Activated B cell treated with CpG ODN at 0.5 μM for 24 hours (primary cell): ENCODE measurements at regions of chr1 and their contacts with region 1.

Region 1: GRCh38 chr1:23577056-23578004 is 18.0 kb upstream of the ID3 start:
- DNase-seq: no peak
- ATAC-seq: peak; percentile 75
- H3K4me3 Mint-ChIP-seq: peak overlapping the region; percentile 74
- H3K27ac Mint-ChIP-seq: peak overlapping the region; percentile 87
- H3K4me1 Mint-ChIP-seq: peaks cover 86% of the 10 kb centered on the region
- H3K27me3 Mint-ChIP-seq: no peaks in the 10 kb centered on the region
- CTCF ChIP-seq: no peak

Region 2: GRCh38 chr1:21865943-21866706 is 1711.2 kb before region 1 on chr1:
- CTCF ChIA-PET with region 1: no interaction called
- POLR2A ChIA-PET with region 1: no interaction called
- intact Hi-C with region 1: no loop called
- DNase-seq: peak; percentile 27
- ATAC-seq: peak; percentile 79
- H3K4me3 Mint-ChIP-seq: peak overlapping the region; percentile 44
- H3K27ac Mint-ChIP-seq: peak overlapping the region; percentile 84
- H3K4me1 Mint-ChIP-seq: peaks cover 21% of the 10 kb centered on the region
- H3K27me3 Mint-ChIP-seq: no peaks in the 10 kb centered on the region
- CTCF ChIP-seq: no peak

Region 3: DNA sequence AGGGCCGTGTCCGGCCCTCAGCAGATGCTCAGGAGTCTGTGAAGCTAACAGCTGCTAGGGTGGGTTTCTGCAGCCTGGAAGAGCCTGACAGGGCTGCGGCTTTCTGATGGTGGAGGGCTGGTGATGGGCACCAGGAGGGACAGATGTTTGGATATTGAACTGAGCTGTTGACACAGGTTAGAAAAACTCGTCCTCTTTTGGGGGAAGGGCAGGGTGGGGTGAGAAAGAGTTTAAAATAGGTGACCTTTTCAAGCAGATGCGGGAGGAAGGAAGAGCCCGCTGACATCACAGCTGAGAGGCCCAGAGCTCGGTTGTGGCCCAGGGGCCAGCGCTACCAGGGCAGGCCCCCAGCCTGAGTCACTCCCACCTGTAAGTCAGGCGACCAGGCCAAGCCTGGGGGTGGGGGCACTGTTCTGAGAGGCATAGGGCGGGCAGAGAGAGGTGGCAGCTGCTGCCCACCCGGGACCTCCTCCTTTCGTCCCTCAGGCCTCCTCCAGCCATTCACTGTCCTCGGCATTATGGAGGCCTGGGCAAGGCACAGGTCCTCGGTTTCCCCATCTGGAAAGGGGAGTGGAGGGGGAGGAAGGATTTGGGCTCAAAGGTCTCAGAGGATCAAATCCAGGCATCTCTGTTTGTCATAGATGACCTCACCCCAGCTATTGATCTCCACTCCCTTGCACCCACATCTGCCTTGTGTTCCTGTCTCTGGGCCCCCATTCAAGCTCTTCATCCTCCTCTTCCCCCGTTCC is 14.3 kb after region 1 on chr1:
- CTCF ChIA-PET with region 1: interaction called, 43 read pairs
- POLR2A ChIA-PET with region 1: interaction called, 1,151 read pairs
- intact Hi-C with region 1: loop called (anchors 1 kb)
- DNase-seq: peak; percentile 67
- ATAC-seq: peak; percentile 80
- H3K4me3 Mint-ChIP-seq: peak overlapping the region; percentile 74
- H3K27ac Mint-ChIP-seq: peak overlapping the region; percentile 89
- H3K4me1 Mint-ChIP-seq: peaks cover 87% of the 10 kb centered on the region
- H3K27me3 Mint-ChIP-seq: no peaks in the 10 kb centered on the region
- CTCF ChIP-seq: no peak

Region 4: GRCh38 chr1:23613191-23614031 is 36.1 kb after region 1 on chr1:
- CTCF ChIA-PET with region 1: interaction called, 7 read pairs
- POLR2A ChIA-PET with region 1: interaction called, 108 read pairs
- intact Hi-C with region 1: loop called (anchors 1 kb)
- DNase-seq: peak; percentile 44
- ATAC-seq: peak; percentile 38
- H3K4me3 Mint-ChIP-seq: no peak overlapping the region
- H3K27ac Mint-ChIP-seq: peak overlapping the region; percentile 92
- H3K4me1 Mint-ChIP-seq: peaks cover 85% of the 10 kb centered on the region
- H3K27me3 Mint-ChIP-seq: no peaks in the 10 kb centered on the region
- CTCF ChIP-seq: no peak

Region 5: DNA sequence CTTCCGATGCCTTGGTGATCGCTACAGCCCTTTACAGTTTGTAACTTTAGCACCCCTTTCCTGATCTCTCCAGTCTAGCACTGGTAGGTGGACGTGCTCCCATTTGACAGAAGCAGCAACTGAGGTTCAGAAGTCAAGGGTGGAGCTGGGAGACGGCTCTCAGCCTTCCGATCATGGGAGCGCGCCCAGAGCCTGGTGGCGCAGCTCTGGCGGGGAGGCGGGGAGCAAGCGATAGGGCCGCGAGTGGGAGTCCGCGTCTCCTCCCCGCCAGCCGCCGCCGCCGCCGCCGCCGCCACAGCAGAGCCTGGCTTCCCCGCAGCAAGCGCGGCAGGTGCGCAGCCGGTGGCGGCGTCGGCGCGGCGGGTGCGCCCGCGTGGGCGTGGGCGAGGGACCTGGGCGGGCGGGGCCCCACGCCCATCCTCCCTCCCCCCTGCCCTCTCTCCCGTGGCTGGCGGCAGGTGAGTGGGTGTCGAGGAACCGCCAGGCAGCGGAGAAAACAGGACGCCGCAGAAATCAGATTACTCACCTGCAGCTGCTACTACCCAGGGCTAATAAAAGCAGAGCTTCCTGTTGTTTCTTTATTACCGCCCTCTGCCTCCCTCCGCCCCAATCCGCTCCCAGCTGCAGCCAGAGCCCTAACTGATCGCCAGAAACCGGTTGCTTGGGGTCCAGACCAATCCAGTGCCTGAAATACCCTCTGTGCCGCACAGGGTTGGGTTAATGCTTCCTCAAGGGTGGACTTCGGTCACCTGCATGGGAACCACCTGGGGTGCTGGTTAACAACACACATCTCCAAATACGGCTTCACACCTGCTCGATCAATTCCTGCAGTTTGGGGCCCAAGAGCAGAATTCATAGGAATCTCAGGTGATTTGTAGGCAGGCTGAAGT is 42.2 kb after region 1 on chr1:
- CTCF ChIA-PET with region 1: interaction called, 7 read pairs
- POLR2A ChIA-PET with region 1: interaction called, 108 read pairs
- intact Hi-C with region 1: loop called (anchors 1 kb)
- DNase-seq: peak; percentile 75
- ATAC-seq: peak; percentile 81
- H3K4me3 Mint-ChIP-seq: peak overlapping the region; percentile 81
- H3K27ac Mint-ChIP-seq: peak overlapping the region; percentile 91
- H3K4me1 Mint-ChIP-seq: peaks cover 92% of the 10 kb centered on the region
- H3K27me3 Mint-ChIP-seq: no peaks in the 10 kb centered on the region
- CTCF ChIP-seq: no peak

Region 6: DNA sequence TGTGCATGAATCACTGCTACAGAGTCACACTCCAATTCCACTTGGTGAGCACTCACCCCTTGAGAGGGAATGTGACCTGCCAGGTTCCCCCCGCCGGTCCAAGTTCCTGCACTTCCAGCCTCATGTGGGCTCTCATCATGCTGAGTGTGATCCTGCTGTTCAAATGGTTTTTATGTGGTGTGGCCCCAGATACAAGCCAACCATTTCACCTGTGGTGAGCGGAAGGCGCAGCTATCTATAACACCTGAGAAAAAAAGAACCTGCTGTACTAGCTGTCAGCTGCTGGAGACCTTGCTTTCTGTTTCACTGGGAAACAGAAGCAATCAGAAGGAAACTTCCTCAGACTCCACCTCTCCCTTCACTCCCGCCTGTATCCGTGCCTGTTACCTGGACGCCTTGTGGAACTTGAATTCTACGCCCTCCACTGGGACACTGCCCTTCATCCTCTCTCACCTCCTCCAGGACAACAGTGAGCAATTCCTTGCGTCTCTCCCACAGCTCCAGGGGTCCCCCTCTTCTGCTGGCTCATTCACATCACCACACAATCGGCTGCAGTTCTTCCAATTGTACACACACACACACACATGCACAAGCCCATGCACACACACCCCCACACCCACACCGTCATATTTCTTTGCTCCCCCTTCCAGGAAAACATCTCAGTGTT is 49.9 kb after region 1 on chr1:
- CTCF ChIA-PET with region 1: interaction called, 4 read pairs
- POLR2A ChIA-PET with region 1: interaction called, 108 read pairs
- intact Hi-C with region 1: loop called (anchors 1 kb)
- DNase-seq: no peak
- ATAC-seq: peak; percentile 14
- H3K4me3 Mint-ChIP-seq: peak overlapping the region; percentile 65
- H3K27ac Mint-ChIP-seq: peak overlapping the region; percentile 84
- H3K4me1 Mint-ChIP-seq: peaks cover 81% of the 10 kb centered on the region
- H3K27me3 Mint-ChIP-seq: no peaks in the 10 kb centered on the region
- CTCF ChIP-seq: no peak

Region 7: DNA sequence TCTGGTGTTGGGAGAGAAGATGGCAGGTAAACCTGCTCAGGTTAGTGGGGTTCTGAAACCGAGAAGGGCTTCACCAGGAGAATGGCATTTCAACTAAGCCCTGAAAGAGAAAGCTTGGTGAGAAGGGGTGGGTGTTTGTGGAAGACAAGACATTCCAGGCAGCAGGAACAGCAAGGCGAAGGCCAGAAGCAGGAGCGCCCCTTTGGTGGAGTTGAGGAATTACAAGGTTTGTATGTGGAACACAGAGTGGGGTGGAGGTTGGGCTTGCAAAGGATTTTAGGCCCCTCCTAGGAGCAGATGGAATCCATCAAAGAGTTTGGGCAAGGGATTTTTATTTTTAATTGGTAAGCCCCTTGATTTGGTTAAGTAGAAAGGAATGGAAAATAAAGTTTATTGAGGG is 141.2 kb after region 1 on chr1:
- CTCF ChIA-PET with region 1: no interaction called
- POLR2A ChIA-PET with region 1: interaction called, 21 read pairs
- intact Hi-C with region 1: no loop called
- DNase-seq: no peak
- ATAC-seq: no peak
- H3K4me3 Mint-ChIP-seq: no peak overlapping the region
- H3K27ac Mint-ChIP-seq: peak overlapping the region; percentile 75
- H3K4me1 Mint-ChIP-seq: peaks cover 53% of the 10 kb centered on the region
- H3K27me3 Mint-ChIP-seq: no peaks in the 10 kb centered on the region
- CTCF ChIP-seq: no peak